ENCODE measurements at regions of chr2 and their contacts with region 1.

Region 1: GRCh38 chr2:23824777-23825212 is 102.1 kb downstream of the ATAD2B start:
- DNase-seq: peak; percentile 34
- ATAC-seq: peak; percentile 75
- H3K4me3 ChIP-seq: no peak overlapping the region
- H3K27ac ChIP-seq: no peak overlapping the region; the same call in 1 of the 2 replicates
- H3K4me1 ChIP-seq: peaks cover 14% of the 10 kb centered on the region
- H3K27me3 ChIP-seq: no peaks in the 10 kb centered on the region
- CTCF ChIP-seq: peak; percentile 59 to 67 (median 64)
- EP300 ChIP-seq: no peak
- POLR2A ChIP-seq: no peak
- RAD21 ChIP-seq: peak; percentile 79

Region 2: GRCh38 chr2:23606968-23607367 is 217.8 kb before region 1 on chr2:
- CTCF ChIA-PET with region 1: no interaction called
- POLR2A ChIA-PET with region 1: no interaction called
- RAD21 ChIA-PET with region 1: no interaction called
- SMC1A ChIA-PET with region 1: no interaction called
- in situ Hi-C with region 1: no loop called
- intact Hi-C with region 1: no loop called
- DNase-seq: no peak
- ATAC-seq: no peak
- H3K4me3 ChIP-seq: no peak overlapping the region
- H3K27ac ChIP-seq: no peak overlapping the region
- H3K4me1 ChIP-seq: no peaks in the 10 kb centered on the region
- H3K27me3 ChIP-seq: no peaks in the 10 kb centered on the region
- CTCF ChIP-seq: no peak
- EP300 ChIP-seq: no peak
- POLR2A ChIP-seq: no peak
- RAD21 ChIP-seq: no peak

Region 3: DNA sequence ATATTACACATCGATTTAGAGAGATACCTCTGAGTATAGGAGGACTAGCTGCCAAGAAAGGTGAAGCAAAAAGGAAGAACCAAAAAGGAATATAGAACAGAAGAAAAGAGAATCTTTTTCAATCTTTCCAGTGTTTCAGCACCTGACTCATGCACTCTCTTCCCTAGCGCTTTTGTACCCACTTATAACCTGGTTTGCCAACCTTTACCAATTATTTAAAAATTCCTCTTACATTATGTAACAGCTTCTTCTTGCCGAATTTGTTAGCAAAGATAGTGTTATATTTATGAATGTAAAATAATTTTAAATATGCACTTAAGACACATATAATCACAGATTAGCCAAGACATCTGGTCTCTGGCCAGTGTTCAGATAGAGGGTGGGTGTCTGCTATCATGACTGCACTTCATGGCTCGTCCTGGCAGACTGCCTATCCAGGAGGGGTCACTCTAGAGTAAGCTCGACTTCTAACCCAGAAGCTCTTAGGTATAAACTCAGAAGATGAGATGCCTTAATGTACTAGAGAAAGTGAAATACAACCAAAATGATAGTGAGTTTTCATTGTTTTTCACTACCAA is 20.7 kb before region 1 on chr2:
- CTCF ChIA-PET with region 1: interaction called, 12 read pairs
- POLR2A ChIA-PET with region 1: no interaction called
- RAD21 ChIA-PET with region 1: interaction called, 6 read pairs
- SMC1A ChIA-PET with region 1: interaction called, 4 read pairs
- in situ Hi-C with region 1: no loop called
- intact Hi-C with region 1: no loop called
- DNase-seq: no peak
- ATAC-seq: peak; percentile 75
- H3K4me3 ChIP-seq: no peak overlapping the region
- H3K27ac ChIP-seq: no peak overlapping the region
- H3K4me1 ChIP-seq: no peaks in the 10 kb centered on the region; the same call in 1 of the 2 replicates
- H3K27me3 ChIP-seq: no peaks in the 10 kb centered on the region
- CTCF ChIP-seq: peak in 2 of 3 experiments; percentile 7 to 8; a peak in 1 of 6 replicates
- EP300 ChIP-seq: no peak
- POLR2A ChIP-seq: no peak
- RAD21 ChIP-seq: no peak

Region 4: GRCh38 chr2:23850564-23851256 is 25.9 kb after region 1 on chr2:
- CTCF ChIA-PET with region 1: interaction called, 14 read pairs
- POLR2A ChIA-PET with region 1: interaction called, 5 read pairs
- RAD21 ChIA-PET with region 1: interaction called, 12 read pairs
- SMC1A ChIA-PET with region 1: interaction called, 8 read pairs
- in situ Hi-C with region 1: no loop called
- intact Hi-C with region 1: no loop called
- DNase-seq: peak; percentile 53
- ATAC-seq: peak; percentile 97
- H3K4me3 ChIP-seq: no peak overlapping the region; the same call in 1 of the 2 replicates
- H3K27ac ChIP-seq: peak overlapping the region; percentile 87
- H3K4me1 ChIP-seq: peaks cover 29% of the 10 kb centered on the region
- H3K27me3 ChIP-seq: no peaks in the 10 kb centered on the region
- CTCF ChIP-seq: no peak
- EP300 ChIP-seq: peak in 1 of 2 experiments; percentile 81; a peak in 2 of 4 replicates
- POLR2A ChIP-seq: no peak
- RAD21 ChIP-seq: no peak

Region 5: GRCh38 chr2:23939987-23940717 is 115.4 kb after region 1 on chr2 and contains the start of gene UBXN2A:
- CTCF ChIA-PET with region 1: interaction called, 8 read pairs
- POLR2A ChIA-PET with region 1: no interaction called
- RAD21 ChIA-PET with region 1: interaction called, 5 read pairs
- SMC1A ChIA-PET with region 1: interaction called, 11 read pairs
- in situ Hi-C with region 1: no loop called
- intact Hi-C with region 1: no loop called
- DNase-seq: no peak
- ATAC-seq: peak; percentile 80
- H3K4me3 ChIP-seq: peak within 1 kb of the TSS; percentile 96
- H3K27ac ChIP-seq: peak within 1 kb of the TSS; percentile 87
- H3K4me1 ChIP-seq: peaks cover 7% of the 10 kb centered on the region; the same call in 1 of the 2 replicates
- H3K27me3 ChIP-seq: no peaks in the 10 kb centered on the region
- CTCF ChIP-seq: no peak
- EP300 ChIP-seq: no peak
- POLR2A ChIP-seq: peak; percentile 92
- RAD21 ChIP-seq: no peak
- polyA plus RNA-seq, gene UBXN2A: 3.7 to 7.2 TPM

Region 6: GRCh38 chr2:24065341-24065740 is 240.5 kb after region 1 on chr2:
- CTCF ChIA-PET with region 1: interaction called, 52 read pairs
- POLR2A ChIA-PET with region 1: no interaction called
- RAD21 ChIA-PET with region 1: interaction called, 15 read pairs
- SMC1A ChIA-PET with region 1: interaction called, 13 read pairs
- in situ Hi-C with region 1: no loop called
- intact Hi-C with region 1: loop called (anchors 1 kb)
- DNase-seq: no peak
- ATAC-seq: no peak
- H3K4me3 ChIP-seq: no peak overlapping the region
- H3K27ac ChIP-seq: no peak overlapping the region
- H3K4me1 ChIP-seq: peaks cover 4% of the 10 kb centered on the region
- H3K27me3 ChIP-seq: no peaks in the 10 kb centered on the region
- CTCF ChIP-seq: no peak
- EP300 ChIP-seq: no peak
- POLR2A ChIP-seq: no peak
- RAD21 ChIP-seq: no peak

Region 7: DNA sequence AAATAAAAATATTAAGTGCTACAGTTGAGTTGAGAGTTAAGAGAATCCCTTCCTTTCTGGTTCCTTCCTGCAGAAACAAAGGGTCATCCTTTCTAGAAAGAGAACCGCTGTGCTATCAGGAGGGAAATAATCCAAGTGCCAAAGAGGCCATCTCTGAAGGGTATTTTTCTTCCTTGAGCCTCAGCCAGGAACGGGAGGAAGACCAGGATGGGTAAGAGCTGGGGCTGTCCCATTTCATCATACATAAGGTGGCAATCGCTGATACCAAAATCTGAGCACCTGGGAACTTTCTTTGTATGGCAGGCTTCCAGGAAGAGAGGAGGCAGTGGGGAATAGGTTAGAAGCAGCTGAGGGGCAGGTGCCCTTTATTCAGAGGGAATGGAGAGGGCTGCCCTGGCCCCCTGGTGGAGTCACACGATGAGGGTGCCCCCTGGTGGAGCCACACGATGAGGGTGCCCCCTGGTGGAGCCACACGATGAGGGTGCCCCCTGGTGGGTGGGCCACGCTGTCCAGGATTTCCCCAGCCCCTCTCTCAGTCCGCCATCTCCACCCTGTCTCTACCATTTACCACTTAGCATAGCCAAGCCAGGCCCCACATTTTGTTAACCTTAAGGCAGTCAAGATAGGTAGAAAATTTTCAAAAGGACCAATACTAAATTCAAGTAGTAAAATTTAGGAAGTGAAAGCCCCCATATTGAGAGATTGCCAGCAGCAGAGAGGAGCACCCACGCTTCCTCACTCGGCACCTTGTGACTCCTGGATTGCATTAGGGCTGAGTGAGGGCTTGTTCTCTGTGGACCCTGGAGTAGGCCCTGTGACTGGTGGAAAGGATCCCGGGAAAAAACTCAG is 339.6 kb after region 1 on chr2:
- CTCF ChIA-PET with region 1: interaction called, 21 read pairs
- POLR2A ChIA-PET with region 1: no interaction called
- RAD21 ChIA-PET with region 1: interaction called, 3 read pairs
- SMC1A ChIA-PET with region 1: interaction called, 4 read pairs
- in situ Hi-C with region 1: no loop called
- intact Hi-C with region 1: loop called (anchors 1 kb)
- DNase-seq: peak; percentile 21
- ATAC-seq: peak; percentile 95
- H3K4me3 ChIP-seq: no peak overlapping the region
- H3K27ac ChIP-seq: no peak overlapping the region; the same call in 1 of the 2 replicates
- H3K4me1 ChIP-seq: 0 out of 2 replicates have a peak, but pooled peaks cover 4% of the 10 kb centered on the region
- H3K27me3 ChIP-seq: no peaks in the 10 kb centered on the region
- CTCF ChIP-seq: peak; percentile 73 to 88 (median 79)
- EP300 ChIP-seq: no peak
- POLR2A ChIP-seq: no peak
- RAD21 ChIP-seq: peak; percentile 59

Measured in GM12878 (cell line).